ENCODE measurements at regions of chr3 and their contacts with region 1.

Region 1: DNA sequence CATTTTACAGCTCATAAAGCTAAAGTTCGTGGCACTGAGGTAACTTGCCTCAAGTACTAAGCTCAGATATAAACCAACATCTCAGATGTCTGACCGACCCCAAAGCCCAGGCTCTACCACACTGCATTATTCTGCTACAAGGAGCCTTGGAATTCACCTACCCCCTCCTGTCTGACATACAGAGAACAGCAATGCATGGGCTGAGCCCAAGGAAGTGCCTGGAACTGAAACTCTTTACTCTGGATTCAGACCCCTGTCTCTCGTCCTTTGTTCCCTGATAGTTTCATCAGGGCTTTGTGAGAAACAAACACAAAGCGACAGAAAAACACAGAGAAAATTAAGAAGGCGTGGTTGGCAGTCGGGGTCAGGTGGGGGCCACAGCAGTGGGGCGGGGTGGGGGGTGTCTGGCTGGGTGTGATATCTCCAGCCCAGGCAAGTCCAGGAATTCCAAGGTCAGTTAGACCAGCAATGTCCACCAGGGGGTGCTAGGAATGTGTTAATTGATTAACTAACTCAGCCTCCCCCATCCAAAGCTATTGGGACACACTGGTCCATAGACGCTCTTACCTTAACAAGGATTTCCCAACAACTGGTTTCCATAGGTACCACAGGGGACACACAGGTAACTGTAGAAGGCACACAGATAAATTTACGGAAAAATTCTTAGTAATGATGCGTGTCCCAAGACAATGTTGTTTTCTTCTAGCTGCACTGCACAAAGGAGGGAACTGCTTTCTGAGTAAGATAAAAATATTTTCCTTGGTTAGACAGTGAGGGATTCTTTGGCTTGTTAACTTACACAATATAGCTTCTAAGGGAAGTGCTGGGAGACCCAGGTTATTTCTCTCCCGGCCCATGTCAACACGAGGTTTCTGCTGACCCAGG is 18.8 kb upstream of the SSUH2 start:
- DNase-seq: peak in 1 of 2 donors; percentile 71
- ATAC-seq: peak in 4 of 8 donors; percentile 29 to 47 (median 29)
- H3K4me3 ChIP-seq: no peak overlapping the region
- H3K27ac ChIP-seq: no peak overlapping the region
- H3K4me1 ChIP-seq: peaks cover 3 to 41% (median 26%) of the 10 kb centered on the region in 9 donors
- H3K27me3 ChIP-seq: no peaks in the 10 kb centered on the region
- CTCF ChIP-seq: peak; percentile 43 to 76 (median 64)

Region 2: DNA sequence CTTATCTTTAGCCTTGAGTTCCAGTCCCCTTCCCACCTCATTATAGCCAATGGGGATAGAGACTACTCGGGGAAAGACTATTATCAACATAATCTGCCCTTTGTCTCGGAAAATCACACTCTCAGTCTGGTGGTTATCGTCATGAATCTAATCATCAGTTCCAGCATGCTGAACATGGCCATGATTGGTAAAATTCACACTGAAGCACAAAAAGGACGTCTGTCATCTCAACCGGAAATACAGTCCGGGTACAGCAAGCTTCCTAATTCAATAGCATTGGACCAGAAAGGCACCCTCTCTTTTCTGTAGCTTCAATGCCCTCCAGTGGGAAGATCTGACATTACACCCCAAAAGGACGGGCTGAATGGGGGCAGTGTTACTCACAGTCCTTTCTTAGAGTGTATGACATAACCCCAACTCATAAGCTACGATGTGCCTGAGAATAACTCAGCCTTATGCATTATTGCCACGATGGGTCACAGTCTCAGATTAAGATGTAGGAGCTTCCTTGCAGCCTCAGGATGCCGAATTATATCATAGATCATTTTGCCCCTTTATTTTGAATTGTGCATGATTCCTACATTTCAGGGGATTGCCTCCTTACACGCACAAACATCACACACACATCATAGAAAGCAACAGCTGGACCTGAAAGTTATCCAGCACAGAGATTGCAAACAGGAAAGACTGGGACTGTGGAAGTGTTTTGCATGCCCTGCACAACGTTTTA is 552.2 kb before region 1 on chr3:
- intact Hi-C with region 1: no loop called
- DNase-seq: peak in 1 of 2 donors; percentile 61
- ATAC-seq: peak; percentile 69 to 97 (median 94)
- H3K4me3 ChIP-seq: peak overlapping the region in 7 of 10 donors; percentile 8 to 40 (median 23)
- H3K27ac ChIP-seq: no peak overlapping the region
- H3K4me1 ChIP-seq: peaks cover 0 to 11% (median 4%) of the 10 kb centered on the region in 9 donors
- H3K27me3 ChIP-seq: no peaks in the 10 kb centered on the region
- CTCF ChIP-seq: peak; percentile 49 to 85 (median 75)

Region 3: DNA sequence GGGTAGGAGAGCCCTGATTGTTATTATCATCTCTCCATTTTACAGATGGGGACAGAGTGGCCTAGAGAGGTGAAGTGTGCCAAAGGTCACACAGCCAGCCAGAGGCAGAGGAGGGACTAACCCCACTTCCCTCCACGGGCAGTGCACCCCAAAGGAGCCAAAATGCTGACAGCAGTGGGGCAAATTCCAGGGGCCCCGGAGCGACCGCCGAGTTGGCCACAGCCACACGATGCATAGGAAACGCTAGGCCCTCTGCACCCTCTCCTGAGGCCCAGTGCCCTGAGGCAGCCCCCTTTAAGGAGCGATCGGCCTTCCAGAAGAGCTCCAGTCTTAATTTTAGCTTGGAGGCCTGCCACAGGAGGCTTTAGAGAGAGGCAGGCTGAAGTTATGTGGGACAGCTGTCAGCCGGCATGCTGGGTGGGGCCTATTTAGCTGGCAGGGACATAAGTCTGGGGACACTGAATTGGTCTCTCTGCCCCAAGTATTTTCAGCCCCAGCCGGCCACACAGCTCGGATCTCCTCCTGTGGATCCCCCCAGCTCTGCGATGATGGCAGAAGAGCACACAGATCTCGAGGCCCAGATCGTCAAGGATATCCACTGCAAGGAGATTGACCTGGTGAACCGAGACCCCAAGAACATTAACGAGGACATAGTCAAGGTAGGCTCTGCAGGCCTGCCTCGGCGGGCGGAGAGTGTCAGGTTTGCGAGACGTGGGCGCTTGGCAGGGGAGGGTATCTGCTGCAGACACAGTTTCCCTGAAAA is 70.1 kb after region 1 on chr3 and contains the start of gene CAV3:
- intact Hi-C with region 1: loop called in 2 of 10 experiments (anchors 5 to 10 kb)
- DNase-seq: peak; percentile 52 to 67
- ATAC-seq: peak; percentile 82 to 91 (median 86)
- H3K4me3 ChIP-seq: peak within 1 kb of the TSS; percentile 10 to 55 (median 43)
- H3K27ac ChIP-seq: peak within 1 kb of the TSS; percentile 35 to 90 (median 83)
- H3K4me1 ChIP-seq: peaks cover 0 to 19% (median 7%) of the 10 kb centered on the region in 9 donors
- H3K27me3 ChIP-seq: no peaks in the 10 kb centered on the region
- CTCF ChIP-seq: no peak
- total RNA-seq, gene CAV3: 20.9 to 32.4 (median 24.9) TPM

Region 4: DNA sequence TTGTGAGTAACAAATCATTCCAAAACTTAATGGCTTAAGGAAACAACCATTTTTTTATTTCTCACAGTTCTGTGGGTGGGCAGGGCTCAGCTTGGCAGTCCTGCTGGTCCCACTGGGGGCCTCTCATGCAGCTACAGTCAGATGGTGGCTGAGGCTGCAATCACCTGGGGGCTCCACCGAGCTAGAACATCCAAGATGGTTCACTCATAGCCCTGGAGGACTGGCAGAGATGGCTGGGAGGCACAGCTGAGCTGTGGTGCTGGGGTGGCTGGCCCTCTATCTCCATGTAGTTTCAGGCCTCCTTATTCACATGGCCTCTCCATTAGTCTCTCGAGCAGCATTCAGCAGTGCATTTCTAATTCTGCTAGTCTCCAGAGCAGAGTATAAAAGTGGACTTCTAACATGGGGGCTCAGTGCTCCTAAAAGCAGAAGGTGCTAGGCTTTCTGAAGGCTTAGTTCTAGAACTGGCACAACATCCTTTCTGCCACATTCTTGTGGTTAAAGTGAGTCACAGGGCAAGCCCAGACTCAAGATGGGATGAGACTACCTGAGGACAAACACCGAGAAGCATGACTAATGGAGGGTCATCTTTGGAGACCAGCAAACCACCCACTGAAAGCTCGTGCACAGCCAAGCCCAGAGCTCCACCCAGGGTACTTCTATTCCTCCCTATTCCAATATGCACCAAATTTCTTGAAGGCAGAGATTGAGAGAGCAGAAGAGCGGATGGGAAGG is 76.5 kb after region 1 on chr3:
- intact Hi-C with region 1: loop called in 1 of 10 experiments (anchors 10 kb)
- DNase-seq: no peak
- ATAC-seq: no peak
- H3K4me3 ChIP-seq: no peak overlapping the region
- H3K27ac ChIP-seq: no peak overlapping the region
- H3K4me1 ChIP-seq: peaks cover 0 to 43% (median 18%) of the 10 kb centered on the region in 9 donors
- H3K27me3 ChIP-seq: no peaks in the 10 kb centered on the region
- CTCF ChIP-seq: no peak

Region 5: GRCh38 chr3:8769088-8769822 is 105.8 kb after region 1 on chr3 and contains the start of gene OXTR:
- intact Hi-C with region 1: loop called in 7 of 10 experiments (anchors 2 to 10 kb)
- DNase-seq: peak; percentile 50 to 56
- ATAC-seq: peak; percentile 89 to 98 (median 94)
- H3K4me3 ChIP-seq: peak within 1 kb of the TSS in 9 of 10 donors; percentile 18 to 54 (median 46)
- H3K27ac ChIP-seq: no peak within 1 kb of the TSS
- H3K4me1 ChIP-seq: peaks cover 0 to 23% (median 18%) of the 10 kb centered on the region in 9 donors
- H3K27me3 ChIP-seq: peaks cover 3 to 62% (median 43%) of the 10 kb centered on the region in 7 donors
- CTCF ChIP-seq: peak; percentile 93 to 100 (median 99)
- total RNA-seq, gene OXTR: 0.12 to 0.49 (median 0.21) TPM in 8 of 10 donors, not detected in the others

Measured in heart right ventricle (tissue), 16 donors.